Heart right ventricle (tissue), 16 donors: ENCODE measurements at regions of chr1 and their contacts with region 1.

Region 1: GRCh38 chr1:160400223-160400645 is at the start of gene VANGL2:
- DNase-seq: peak; percentile 84 to 88
- ATAC-seq: peak; percentile 68 to 88 (median 82)
- H3K4me3 ChIP-seq: peak within 1 kb of the TSS; percentile 58 to 87 (median 75)
- H3K27ac ChIP-seq: peak within 1 kb of the TSS in 9 of 10 donors; percentile 49 to 80 (median 56)
- H3K4me1 ChIP-seq: peaks cover 4 to 43% (median 30%) of the 10 kb centered on the region in 9 donors
- H3K27me3 ChIP-seq: peaks cover 0 to 31% (median 0%) of the 10 kb centered on the region in 7 donors
- CTCF ChIP-seq: peak in 1 of 9 donors; percentile 8
- total RNA-seq, gene VANGL2: 1.2 to 4.1 (median 2.1) TPM

Region 2: GRCh38 chr1:158654571-158654970 is 1745.7 kb before region 1 on chr1:
- intact Hi-C with region 1: loop called in 1 of 10 experiments (anchors 10 kb)
- DNase-seq: no peak
- ATAC-seq: peak in 4 of 8 donors; percentile 16 to 70 (median 46)
- H3K4me3 ChIP-seq: no peak overlapping the region
- H3K27ac ChIP-seq: peak overlapping the region in 1 of 10 donors; percentile 60
- H3K4me1 ChIP-seq: peaks cover 0 to 26% (median 0%) of the 10 kb centered on the region in 9 donors
- H3K27me3 ChIP-seq: peaks cover 0 to 4% (median 0%) of the 10 kb centered on the region in 7 donors
- CTCF ChIP-seq: no peak